ENCODE measurements at regions of chr3 and their contacts with region 1.

Region 1: GRCh38 chr3:7444886-7445285 is 584.0 kb downstream of the GRM7 start:
- DNase-seq: no peak
- H3K4me3 ChIP-seq: no peak overlapping the region
- CTCF ChIP-seq: no peak

Region 2: GRCh38 chr3:7407107-7407506 is 37.8 kb before region 1 on chr3:
- in situ Hi-C with region 1: loop called (anchors 5 kb)
- DNase-seq: no peak
- H3K4me3 ChIP-seq: no peak overlapping the region
- CTCF ChIP-seq: peak; percentile 28

Measured in astrocyte of the cerebellum (primary cell).